PC-9 (cell line): ENCODE measurements at regions of chr3 and their contacts with region 1.

Region 1: DNA sequence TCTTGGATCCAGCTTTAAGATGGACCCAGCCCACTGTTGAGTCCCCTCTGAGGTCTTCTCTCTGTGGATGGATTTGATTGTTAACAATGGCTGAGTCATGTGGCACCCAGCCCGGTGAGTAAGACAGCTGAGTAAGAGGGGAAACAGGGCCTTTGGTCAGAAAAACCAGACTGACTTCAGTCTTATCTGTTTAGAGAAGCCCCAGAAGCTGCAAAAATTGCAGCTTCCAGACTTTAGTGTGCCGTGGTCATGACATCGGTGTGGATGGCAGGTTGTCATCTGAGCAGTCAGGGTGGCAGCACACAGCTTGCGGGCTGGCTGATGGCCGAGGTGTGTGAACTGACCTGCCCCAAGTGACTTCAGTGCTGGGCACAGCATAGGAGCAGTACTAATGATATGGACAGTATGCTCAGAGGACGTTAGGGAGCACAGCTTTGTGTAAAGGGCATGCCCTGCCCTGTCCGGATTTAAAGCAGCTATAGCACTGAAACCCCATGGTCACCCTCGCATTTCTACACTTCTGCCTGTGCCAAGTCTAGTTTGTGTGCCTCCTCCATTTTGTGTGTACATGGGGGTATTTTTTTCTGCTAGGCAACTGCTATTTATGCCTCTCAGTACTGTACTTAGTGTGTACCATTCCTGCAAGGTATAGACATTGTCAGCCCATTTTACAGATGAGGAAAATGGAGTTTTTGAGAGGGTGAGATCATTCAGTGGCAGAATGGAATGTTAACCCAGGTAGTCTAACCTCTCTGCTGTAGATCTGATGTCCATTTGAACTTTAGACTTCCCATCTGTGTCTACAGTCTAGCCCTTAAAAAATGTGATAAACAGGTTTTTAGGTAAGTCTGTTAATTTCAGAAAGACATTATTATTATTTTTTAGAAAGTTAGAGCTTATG is 44.4 kb downstream of the FLNB start:
- DNase-seq: peak; percentile 83 to 92
- H3K4me3 ChIP-seq: peak overlapping the region; percentile 33; the same call in 1 of the 2 replicates
- H3K27ac ChIP-seq: peak overlapping the region; percentile 99
- H3K4me1 ChIP-seq: peaks cover 75% of the 10 kb centered on the region
- H3K27me3 ChIP-seq: no peaks in the 10 kb centered on the region
- CTCF ChIP-seq: no peak

Region 2: DNA sequence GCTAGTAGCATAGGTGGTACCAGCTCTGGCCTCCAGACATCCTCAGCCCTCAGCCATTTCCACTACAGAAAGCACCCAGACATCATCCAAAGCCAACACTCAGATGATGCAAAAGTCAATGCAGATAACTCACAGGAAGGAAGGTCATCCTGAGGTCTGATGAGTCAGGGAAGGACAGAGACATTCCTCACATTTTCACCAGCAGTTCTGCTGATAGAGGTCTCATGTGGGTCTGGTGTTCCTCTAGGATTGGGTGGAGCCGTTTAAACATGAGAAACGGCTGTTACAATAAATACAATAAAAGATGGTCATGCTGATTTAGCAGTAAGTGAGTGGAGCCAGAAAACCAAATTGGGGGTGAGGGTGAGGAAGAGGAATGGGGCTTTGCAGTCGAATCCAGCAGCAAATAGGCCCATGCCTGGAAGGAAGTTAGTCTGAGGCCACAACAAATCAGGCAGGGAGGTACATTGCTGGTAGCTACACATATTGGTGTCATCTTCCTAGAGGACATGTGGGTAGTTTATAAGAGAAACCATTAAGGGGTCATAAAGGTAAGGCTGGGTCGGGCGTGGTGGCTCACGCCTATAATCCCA is 77.7 kb before region 1 on chr3:
- CTCF ChIA-PET with region 1: interaction called, 3 read pairs
- POLR2A ChIA-PET with region 1: interaction called, 3 read pairs
- intact Hi-C with region 1: loop called (anchors 2 kb)
- DNase-seq: peak; percentile 63 to 91
- H3K4me3 ChIP-seq: no peak overlapping the region
- H3K27ac ChIP-seq: peak overlapping the region; percentile 100
- H3K4me1 ChIP-seq: peaks cover 98% of the 10 kb centered on the region
- H3K27me3 ChIP-seq: no peaks in the 10 kb centered on the region
- CTCF ChIP-seq: no peak

Region 3: DNA sequence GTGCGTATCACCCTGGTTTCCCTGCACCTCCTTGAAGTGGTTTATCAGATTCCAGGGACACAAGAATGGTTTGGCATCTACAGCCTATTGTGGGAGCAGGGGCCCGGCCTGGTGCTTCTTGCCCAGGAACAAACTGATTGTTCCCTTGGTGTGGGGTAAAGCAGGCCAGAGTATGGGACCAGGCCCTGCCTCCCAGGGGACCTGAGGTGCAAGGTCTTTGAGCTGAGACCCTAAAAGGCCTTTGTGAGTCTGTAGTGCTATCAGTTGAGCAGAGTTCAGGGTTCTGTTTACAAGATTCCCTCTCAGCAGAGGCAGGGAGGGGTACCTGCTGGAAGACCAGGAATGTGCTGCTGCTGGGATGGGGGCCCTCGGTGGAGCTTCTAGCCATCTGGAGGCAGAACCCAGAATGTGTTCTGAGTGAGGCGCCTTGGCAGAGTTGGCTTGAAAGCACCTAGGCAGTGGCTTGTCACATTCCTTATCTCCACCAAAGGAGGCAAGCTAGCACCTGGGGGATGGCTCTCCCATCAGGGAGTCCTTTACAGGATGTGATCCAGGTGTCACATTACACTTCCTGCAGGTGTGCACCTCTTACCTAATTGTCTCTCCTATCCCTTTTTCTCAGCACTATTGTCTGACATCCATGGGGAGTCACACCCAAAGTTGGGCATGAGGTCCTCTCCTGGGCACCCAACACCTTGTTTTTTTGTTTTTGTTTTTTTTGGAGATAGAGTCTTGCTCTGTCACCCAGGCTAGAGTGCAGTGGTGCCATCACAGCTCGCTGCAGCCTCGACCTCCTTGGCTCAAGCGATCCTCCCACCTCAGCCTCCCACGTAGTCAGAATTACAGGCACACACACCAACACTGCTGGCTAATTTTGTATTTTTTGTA is 31.3 kb before region 1 on chr3:
- CTCF ChIA-PET with region 1: interaction called, 7 read pairs
- POLR2A ChIA-PET with region 1: interaction called, 3 read pairs
- intact Hi-C with region 1: loop called (anchors 1 kb)
- DNase-seq: peak; percentile 77 to 92
- H3K4me3 ChIP-seq: no peak overlapping the region
- H3K27ac ChIP-seq: peak overlapping the region; percentile 51
- H3K4me1 ChIP-seq: peaks cover 71% of the 10 kb centered on the region
- H3K27me3 ChIP-seq: no peaks in the 10 kb centered on the region
- CTCF ChIP-seq: no peak; the same call in 1 of the 2 replicates

Region 4: GRCh38 chr3:58066842-58067241 is 14.2 kb after region 1 on chr3:
- CTCF ChIA-PET with region 1: no interaction called
- POLR2A ChIA-PET with region 1: no interaction called
- intact Hi-C with region 1: no loop called
- DNase-seq: no peak
- H3K4me3 ChIP-seq: no peak overlapping the region
- H3K27ac ChIP-seq: no peak overlapping the region
- H3K4me1 ChIP-seq: no peaks in the 10 kb centered on the region; the same call in 1 of the 2 replicates
- H3K27me3 ChIP-seq: no peaks in the 10 kb centered on the region
- CTCF ChIP-seq: no peak

Region 5: DNA sequence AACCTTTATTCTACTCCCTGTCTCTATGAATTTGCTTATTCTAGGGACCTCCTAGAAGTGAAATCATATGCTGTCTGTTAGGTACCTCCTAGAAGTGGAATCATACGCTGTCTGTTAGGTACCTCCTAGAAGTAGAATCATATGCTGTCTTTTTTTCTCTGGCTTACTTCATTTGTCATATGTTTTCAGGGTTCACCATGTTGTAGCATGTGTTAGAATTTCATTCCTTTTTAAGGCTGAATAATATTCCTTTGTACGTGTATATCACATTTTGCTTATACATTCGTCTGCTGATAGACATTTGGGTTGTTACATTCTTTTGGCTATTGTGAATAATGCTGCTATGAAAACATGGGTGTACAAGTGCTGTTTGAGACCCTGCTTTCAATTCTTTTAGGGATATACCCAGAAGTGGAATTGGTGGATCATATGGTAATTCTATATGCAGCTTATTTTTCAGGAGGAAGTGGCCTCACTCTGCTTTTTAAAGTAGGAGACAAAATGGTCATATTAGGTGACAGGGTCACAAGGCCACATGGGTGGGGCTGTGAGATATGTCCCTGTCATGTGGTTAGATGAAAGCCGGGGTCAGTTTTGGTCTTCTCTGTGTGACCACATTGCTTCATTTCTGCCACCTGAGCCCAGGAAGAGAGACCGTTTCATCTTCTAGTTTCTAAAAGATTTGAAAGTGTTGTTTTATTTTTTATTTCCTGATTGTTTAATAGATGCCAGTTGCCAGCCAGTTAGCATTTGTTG is 32.3 kb after region 1 on chr3:
- CTCF ChIA-PET with region 1: interaction called, 4 read pairs
- POLR2A ChIA-PET with region 1: no interaction called
- intact Hi-C with region 1: loop called (anchors 2 kb)
- DNase-seq: peak in 1 of 2 experiments; percentile 17
- H3K4me3 ChIP-seq: no peak overlapping the region
- H3K27ac ChIP-seq: peak overlapping the region; percentile 6
- H3K4me1 ChIP-seq: peaks cover 10% of the 10 kb centered on the region; the same call in 1 of the 2 replicates
- H3K27me3 ChIP-seq: no peaks in the 10 kb centered on the region
- CTCF ChIP-seq: no peak

Region 6: DNA sequence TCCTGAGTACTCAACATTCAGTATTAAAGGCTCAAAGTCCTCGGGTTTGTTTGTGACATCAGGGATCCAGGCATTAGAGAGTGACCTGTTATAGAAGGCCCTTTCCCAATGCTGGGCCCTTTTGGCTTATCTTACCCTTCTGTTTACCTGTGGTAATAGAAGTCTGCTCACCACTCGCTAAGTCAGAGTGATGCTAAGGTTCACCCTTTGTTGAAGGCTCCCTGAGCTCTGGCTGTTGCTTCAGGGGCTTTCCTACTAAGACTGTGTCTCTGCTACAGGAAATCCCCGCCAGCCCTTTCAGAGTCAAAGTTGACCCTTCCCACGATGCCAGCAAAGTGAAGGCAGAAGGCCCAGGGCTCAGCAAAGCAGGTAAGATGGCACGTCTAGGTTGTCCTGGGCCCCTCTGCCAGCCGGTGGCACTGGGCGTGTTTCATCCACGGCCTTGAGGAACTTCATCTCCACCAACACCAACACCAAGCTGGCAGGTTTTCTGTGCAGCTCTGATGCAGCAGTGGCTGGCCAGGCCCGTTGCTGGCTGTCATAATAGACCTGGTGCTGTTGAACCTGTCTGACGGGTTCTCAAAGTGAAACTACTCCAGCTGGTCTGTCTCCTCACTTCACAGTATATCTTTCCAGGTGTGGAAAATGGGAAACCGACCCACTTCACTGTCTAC is 59.0 kb after region 1 on chr3:
- CTCF ChIA-PET with region 1: no interaction called
- POLR2A ChIA-PET with region 1: no interaction called
- intact Hi-C with region 1: loop called (anchors 5 kb)
- DNase-seq: peak; percentile 79 to 84
- H3K4me3 ChIP-seq: no peak overlapping the region
- H3K27ac ChIP-seq: peak overlapping the region; percentile 68
- H3K4me1 ChIP-seq: peaks cover 20% of the 10 kb centered on the region
- H3K27me3 ChIP-seq: no peaks in the 10 kb centered on the region
- CTCF ChIP-seq: no peak